Adrenal gland (tissue), 19 donors: ENCODE measurements at regions of chr19 and their contacts with region 1.

Region 1: DNA sequence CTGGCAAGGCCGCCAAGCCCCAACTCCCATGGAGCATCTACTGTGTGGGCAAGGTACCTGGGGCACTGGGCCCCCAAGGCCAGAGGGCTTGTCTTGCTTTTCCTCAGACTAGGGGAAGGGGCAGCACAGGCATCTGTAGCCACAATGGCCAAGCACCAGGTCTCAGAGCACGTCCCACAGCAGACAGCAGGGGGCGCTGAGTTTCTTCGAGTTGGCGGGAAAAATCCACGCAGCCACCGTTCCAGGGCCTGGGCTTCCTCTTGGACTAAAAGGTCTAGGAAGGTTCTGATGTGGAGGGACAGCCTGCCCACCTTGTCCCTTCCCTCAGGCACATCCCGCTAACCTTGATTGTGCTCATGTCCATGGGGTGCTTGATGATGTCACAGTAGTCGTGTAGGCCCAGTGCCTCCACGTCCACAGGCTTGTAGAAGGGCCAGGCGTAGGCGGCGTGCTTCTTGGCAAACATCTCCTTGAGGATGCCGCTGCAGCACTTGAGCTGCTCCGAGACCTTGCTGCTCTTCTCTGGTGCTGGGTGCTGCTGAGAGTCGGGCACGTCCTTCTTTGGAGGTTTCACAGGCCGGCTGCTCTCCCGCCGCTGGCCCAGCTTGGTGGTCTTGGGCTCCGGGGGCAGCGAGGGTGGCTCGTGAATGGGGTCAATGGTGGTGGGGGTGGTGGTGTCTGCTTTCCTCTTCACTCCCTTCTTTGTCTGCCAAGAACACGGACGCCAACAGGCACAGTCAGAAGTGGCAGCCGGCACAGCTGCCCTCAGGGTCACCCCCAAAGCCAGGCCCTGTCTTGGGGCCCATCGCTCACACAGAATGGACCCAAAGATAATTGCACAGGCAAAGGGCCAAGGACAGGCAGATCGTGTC is 32.0 kb upstream of the EPHX3 start:
- DNase-seq: peak; percentile 71 to 90 (median 81)
- H3K4me3 ChIP-seq: no peak overlapping the region
- H3K27ac ChIP-seq: peak overlapping the region in 4 of 5 donors; percentile 50 to 91 (median 75)
- H3K4me1 ChIP-seq: peaks cover 26 to 46% of the 10 kb centered on the region in 2 donors
- H3K27me3 ChIP-seq: no peaks in the 10 kb centered on the region
- CTCF ChIP-seq: peak; percentile 70 to 88 (median 78)
- POLR2A ChIP-seq: no peak

Region 2: DNA sequence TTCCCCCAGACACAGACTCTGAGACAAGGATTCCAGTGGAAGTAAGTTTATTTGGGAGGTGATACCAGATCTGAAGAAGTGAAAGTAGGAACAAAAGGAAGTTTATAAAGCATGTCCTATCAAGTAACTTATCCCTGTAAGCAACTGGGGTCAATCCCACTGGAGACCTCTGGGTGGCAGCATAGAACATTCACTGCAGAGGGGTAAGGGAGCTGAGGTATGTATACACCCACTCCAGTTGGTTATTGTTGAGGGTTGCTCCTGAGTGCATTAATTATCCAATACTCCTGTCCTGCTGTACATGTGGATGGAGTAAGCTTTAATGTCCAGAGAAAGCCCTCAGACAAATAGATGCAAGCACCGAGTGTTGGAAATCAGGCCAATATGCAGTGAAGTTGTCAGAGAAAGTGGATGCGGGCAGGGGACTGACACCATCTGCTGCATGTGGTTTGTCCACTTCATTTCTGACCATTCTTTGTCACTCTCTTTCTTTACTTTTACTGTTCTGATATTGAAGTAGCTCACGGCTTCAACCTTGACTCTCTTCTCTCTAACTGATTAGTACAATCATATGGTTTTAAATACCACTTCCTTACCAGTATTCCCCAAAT is 110.2 kb before region 1 on chr19:
- intact Hi-C with region 1: no loop called
- DNase-seq: peak in 2 of 7 donors; percentile 27 to 45
- H3K4me3 ChIP-seq: no peak overlapping the region
- H3K27ac ChIP-seq: no peak overlapping the region
- H3K4me1 ChIP-seq: no peaks in the 10 kb centered on the region
- H3K27me3 ChIP-seq: no peaks in the 10 kb centered on the region
- CTCF ChIP-seq: peak in 5 of 6 experiments; percentile 11 to 46 (median 32)
- POLR2A ChIP-seq: no peak

Region 3: DNA sequence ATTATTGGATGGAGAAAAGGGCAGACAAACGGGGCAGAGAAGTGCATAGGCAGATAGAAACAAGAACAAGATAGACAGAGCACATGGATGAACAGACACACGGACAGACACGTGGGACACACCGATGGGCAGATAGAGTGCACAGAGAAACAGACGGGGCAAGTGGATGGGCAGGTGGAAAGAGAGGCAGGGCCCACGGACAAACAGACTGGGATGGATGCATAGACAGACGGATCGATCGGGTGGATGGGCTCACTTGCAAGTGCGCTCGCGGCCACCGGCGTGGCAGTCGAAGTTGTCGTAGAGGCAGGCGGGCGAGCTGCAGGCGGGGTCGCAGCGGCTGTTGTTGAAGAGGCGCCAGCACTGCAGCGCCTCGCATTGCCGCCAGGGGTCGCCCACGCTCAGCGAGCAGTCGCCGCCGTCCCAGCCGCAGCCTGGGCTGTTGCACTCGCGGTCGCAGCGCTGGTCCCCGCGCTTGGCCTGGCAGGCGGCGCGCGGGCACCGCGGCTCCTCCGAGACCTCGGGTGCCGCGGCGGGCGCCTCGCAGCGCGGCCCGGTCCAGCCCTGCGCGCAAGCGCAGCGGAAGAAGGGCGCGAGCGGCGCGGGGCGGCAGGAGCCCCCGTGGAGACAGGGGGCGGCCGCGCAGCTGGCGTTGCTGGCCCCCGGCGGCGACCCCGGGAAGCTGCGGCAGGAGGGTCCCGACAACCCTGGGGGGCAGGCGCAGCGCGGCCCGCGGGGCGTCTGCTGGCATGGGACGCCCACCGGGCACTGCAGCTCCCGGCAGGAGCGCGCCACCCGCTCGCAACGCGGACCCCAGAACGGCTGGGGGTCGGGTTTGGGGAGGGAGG is 86.8 kb before region 1 on chr19:
- intact Hi-C with region 1: loop called in 1 of 2 experiments (anchors 5 kb)
- DNase-seq: peak; percentile 65 to 87 (median 81)
- H3K4me3 ChIP-seq: peak overlapping the region in 1 of 4 donors; percentile 47
- H3K27ac ChIP-seq: no peak overlapping the region
- H3K4me1 ChIP-seq: no peaks in the 10 kb centered on the region
- H3K27me3 ChIP-seq: no peaks in the 10 kb centered on the region
- CTCF ChIP-seq: peak; percentile 78 to 100 (median 92)
- POLR2A ChIP-seq: no peak

Region 4: DNA sequence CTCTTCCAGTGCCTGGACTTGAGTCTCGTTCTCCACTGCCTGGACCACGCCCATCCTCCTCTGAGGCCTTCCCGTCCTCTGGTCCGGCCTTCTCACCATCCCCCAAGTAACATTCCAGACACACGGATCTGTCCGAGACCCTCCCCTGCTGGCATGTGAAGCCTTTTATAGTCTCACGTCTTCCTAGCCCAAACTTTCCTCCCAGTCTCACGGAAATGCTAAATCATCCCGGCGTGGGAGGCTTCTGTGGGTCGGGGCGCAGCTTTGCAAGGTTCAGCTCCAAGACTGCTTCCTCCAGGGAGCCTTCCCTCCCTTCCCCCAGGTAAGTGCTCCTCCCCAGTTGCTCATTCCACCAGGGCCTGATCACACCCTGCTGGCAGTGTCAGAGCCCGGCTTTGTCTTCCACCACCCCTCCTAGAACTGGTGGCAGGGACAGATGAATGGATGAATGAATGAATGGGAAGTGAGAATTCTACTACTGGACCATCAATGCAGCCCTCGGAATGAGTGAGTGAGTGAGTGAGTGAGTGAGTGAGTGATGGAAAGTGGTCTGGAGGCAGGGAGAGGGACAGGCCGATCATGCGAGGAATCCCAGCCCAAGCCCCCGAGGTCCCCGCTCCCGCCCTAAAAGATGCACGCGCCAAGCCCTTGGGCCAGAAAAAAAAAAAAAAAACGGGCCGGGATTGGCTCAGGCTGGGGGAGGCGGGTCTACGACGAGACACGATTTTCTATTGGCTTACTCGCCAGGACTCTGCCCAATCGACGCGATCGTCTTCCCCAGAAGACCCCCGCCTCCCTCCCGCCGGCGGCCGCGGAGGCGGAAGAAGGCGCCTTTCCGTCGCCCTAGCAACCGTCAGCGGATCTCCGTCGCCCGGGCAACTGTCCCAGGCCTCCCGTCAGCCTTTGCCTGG is 41.3 kb before region 1 on chr19:
- intact Hi-C with region 1: no loop called
- DNase-seq: peak; percentile 87 to 96 (median 92)
- H3K4me3 ChIP-seq: peak overlapping the region in 2 of 4 donors; percentile 23 to 75
- H3K27ac ChIP-seq: peak overlapping the region in 1 of 5 donors; percentile 41
- H3K4me1 ChIP-seq: peaks cover 5 to 10% of the 10 kb centered on the region in 2 donors
- H3K27me3 ChIP-seq: no peaks in the 10 kb centered on the region
- CTCF ChIP-seq: no peak
- POLR2A ChIP-seq: no peak

Region 5: DNA sequence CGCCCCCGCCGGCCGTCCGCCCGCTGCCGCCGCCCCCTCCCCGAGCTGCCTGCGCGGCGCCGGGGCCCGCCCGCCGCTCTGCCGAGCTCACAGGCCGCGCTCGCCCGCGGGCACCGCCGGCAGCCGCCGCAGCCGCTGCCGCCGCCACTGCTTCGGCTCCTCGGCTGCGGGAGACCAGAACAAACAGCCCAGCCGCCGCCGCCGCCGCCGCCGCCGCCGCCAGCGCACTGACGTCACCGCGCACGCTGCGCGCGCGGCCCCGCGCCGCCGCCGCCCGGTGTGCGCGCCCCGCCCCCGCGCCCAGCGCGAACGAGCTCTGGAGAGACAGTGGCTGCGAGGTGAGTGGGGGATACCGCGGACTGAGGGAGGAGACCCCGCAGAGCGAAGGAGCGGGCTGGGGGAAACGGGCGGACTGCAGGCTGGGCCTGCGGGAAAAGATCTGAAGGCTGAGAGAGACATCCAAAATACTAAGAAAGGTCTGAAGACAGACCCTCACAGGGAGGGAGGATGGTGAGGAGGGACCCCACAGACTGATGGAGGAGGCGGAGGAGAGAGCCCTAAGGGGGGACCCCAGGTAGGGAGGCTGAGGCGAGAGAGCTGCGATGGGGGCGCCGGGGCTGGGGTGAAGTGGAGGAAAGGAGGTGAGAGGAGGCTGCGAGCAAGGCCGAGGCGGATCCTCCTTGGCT is 68.2 kb after region 1 on chr19 and contains the start of gene BRD4:
- intact Hi-C with region 1: loop called in 1 of 2 experiments (anchors 5 kb)
- DNase-seq: peak; percentile 59 to 79 (median 69)
- H3K4me3 ChIP-seq: peak within 1 kb of the TSS; percentile 70 to 99 (median 84)
- H3K27ac ChIP-seq: peak within 1 kb of the TSS; percentile 82 to 100 (median 93)
- H3K4me1 ChIP-seq: peaks cover 46 to 54% of the 10 kb centered on the region in 2 donors
- H3K27me3 ChIP-seq: no peaks in the 10 kb centered on the region
- CTCF ChIP-seq: no peak
- POLR2A ChIP-seq: peak; percentile 47 to 68
- total RNA-seq, gene BRD4: 10.1 to 109 (median 40.6) TPM

Region 6: DNA sequence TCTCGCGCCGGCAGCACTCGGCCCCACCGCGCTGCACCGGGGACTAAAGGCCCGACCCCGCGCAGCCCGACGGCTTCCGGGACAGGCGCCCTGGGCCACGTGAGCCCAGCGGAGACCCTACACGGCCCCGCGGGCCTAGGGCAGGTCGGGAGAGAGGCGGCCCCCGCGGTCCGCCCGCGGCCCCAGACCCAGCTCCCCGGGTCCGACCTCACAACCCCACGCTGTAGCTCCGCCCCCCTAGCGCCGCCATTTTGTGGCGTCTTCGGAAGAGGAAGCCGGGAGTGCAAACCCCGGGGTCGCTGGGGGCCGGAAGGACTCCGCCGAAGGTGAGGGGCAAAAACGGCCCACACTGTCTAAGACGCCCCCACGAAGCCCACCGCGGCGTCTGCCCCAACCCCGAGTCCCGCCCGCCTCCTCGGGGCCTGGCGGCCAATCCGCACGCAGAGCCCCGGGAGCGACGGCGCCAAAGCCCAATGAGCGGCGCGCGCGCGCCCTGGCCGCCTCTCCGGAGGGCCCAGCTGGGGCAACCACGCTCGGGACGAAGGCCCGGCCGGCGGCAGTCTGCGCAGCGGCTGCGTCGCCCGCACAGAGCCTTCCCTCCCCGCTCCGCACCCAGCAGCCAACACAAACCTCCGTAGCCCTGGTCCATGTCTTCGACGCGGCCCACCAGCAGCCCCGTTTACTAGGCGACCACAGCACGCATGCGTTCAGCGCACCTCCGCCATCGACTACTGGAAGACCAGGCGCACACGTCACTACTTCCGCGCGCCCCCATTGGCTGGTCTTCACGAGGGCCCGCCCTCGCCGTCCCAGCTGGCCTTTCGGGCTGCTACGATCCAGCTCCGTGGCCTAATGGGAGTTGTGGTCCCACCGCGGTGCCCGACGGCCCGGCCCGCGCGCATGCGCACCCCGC is 115.0 kb after region 1 on chr19 and contains the start of gene AKAP8:
- intact Hi-C with region 1: loop called in 1 of 2 experiments (anchors 5 kb)
- DNase-seq: peak; percentile 98 to 99 (median 99)
- H3K4me3 ChIP-seq: peak within 1 kb of the TSS; percentile 61 to 98 (median 86)
- H3K27ac ChIP-seq: peak within 1 kb of the TSS; percentile 86 to 98 (median 95)
- H3K4me1 ChIP-seq: peaks cover 19 to 47% of the 10 kb centered on the region in 2 donors
- H3K27me3 ChIP-seq: no peaks in the 10 kb centered on the region
- CTCF ChIP-seq: peak in 1 of 6 experiments; percentile 1
- POLR2A ChIP-seq: peak; percentile 79 to 91
- total RNA-seq, gene AKAP8: 13.0 to 45.8 (median 31.6) TPM